Panc1 (cell line): ENCODE measurements at regions of chr6 and their contacts with region 1.

Region 1: GRCh38 chr6:106792536-106793236 is 163.3 kb downstream of the QRSL1 start:
- DNase-seq: no peak
- ATAC-seq: no peak
- H3K4me3 ChIP-seq: no peak overlapping the region
- H3K27ac ChIP-seq: no peak overlapping the region
- H3K4me1 ChIP-seq: no peaks in the 10 kb centered on the region
- H3K27me3 ChIP-seq: peaks cover 8% of the 10 kb centered on the region; the same call in 1 of the 2 replicates
- CTCF ChIP-seq: no peak

Region 2: DNA sequence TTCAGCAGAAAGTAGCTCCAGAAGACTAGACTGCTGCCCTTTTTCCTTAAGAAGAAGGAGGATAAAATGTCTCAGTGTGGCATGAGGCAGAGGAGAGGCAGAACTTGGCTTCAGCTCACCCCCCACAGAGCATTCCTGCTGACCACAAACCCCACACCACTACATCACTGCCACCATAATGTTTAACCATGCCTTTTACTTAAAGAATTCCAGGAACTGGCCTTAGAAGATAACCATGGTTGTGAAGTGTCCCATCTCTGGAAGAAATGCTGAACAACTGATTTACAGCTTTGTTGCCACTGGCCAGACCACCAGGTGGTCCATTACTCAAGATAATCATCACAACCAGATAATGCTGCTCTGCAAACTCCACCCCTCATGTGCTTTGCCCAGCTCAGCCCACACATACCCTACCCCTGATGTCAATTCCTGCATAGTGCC is 27.7 kb after region 1 on chr6:
- CTCF ChIA-PET with region 1: no interaction called
- POLR2A ChIA-PET with region 1: interaction called, 10 read pairs
- in situ Hi-C with region 1: no loop called
- intact Hi-C with region 1: no loop called
- DNase-seq: no peak
- ATAC-seq: no peak
- H3K4me3 ChIP-seq: no peak overlapping the region
- H3K27ac ChIP-seq: no peak overlapping the region
- H3K4me1 ChIP-seq: no peaks in the 10 kb centered on the region
- H3K27me3 ChIP-seq: peaks cover 3% of the 10 kb centered on the region; the same call in 1 of the 2 replicates
- CTCF ChIP-seq: no peak

Region 3: DNA sequence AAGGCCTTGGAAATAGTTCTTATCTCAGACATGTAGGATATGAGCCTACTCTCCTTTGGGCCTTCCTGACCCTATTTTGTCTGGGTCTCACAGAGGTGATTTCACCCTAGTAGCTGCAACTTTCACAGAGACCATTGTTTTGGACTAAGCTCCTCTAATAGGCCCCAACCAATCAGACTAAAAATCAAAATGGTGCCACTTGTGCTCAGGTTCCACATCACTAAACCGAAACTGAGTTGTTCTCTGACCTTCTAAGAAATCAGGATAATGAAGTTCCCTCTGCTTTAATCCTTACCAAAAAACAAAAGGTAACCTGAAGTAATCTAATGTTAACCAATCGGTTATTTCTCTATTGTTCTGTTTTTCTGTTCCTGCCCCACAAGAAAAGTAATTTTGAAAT is 38.2 kb after region 1 on chr6:
- CTCF ChIA-PET with region 1: no interaction called
- POLR2A ChIA-PET with region 1: no interaction called
- in situ Hi-C with region 1: no loop called
- intact Hi-C with region 1: no loop called
- DNase-seq: no peak
- ATAC-seq: no peak
- H3K4me3 ChIP-seq: no peak overlapping the region
- H3K27ac ChIP-seq: no peak overlapping the region
- H3K4me1 ChIP-seq: no peaks in the 10 kb centered on the region
- H3K27me3 ChIP-seq: no peaks in the 10 kb centered on the region; the same call in 1 of the 2 replicates
- CTCF ChIP-seq: no peak

Region 4: GRCh38 chr6:106870824-106871717 is 78.4 kb after region 1 on chr6:
- CTCF ChIA-PET with region 1: no interaction called
- POLR2A ChIA-PET with region 1: no interaction called
- in situ Hi-C with region 1: no loop called
- intact Hi-C with region 1: no loop called
- DNase-seq: no peak
- ATAC-seq: peak; percentile 56
- H3K4me3 ChIP-seq: no peak overlapping the region
- H3K27ac ChIP-seq: peak overlapping the region; percentile 36
- H3K4me1 ChIP-seq: 0 out of 2 replicates have a peak, but pooled peaks cover 4% of the 10 kb centered on the region
- H3K27me3 ChIP-seq: no peaks in the 10 kb centered on the region
- CTCF ChIP-seq: no peak